GM12878 (cell line): ENCODE measurements at regions of chr2 and their contacts with region 1.

Region 1: DNA sequence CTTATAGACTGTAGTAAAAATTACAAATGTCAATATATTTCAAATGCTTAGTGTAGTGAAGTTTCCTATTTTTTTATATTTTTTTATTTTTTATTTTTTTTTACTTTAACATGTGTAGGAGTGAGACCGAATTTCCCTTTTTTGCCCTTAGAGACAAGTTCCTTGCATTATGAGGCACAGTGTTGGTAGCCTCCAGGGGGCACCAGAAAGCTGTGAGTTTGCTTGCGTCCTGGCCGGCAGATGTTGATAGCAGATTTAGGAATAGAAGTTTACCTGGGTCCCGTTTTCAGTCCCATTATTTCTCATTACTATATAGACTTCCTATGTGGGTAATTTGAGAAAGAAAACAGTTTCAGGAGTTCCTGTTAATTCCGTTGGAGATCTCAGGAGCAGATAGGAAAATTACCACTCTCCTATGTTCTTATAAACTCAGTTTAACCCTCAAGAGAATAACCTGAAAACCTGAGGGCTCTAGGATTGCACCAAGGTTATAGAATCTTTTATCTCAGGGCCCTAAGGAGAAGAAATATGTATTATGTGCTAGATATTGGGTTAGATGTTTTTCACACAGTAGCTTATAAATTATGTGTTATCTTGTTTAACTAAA is 157.5 kb upstream of the SESTD1 start:
- DNase-seq: no peak
- ATAC-seq: peak; percentile 89
- H3K4me3 ChIP-seq: no peak overlapping the region
- H3K27ac ChIP-seq: no peak overlapping the region
- H3K4me1 ChIP-seq: no peaks in the 10 kb centered on the region
- H3K27me3 ChIP-seq: no peaks in the 10 kb centered on the region; a peak in 1 of 4 replicates
- CTCF ChIP-seq: peak; percentile 66 to 77 (median 69)
- EP300 ChIP-seq: no peak
- POLR2A ChIP-seq: no peak
- RAD21 ChIP-seq: peak; percentile 76

Region 2: DNA sequence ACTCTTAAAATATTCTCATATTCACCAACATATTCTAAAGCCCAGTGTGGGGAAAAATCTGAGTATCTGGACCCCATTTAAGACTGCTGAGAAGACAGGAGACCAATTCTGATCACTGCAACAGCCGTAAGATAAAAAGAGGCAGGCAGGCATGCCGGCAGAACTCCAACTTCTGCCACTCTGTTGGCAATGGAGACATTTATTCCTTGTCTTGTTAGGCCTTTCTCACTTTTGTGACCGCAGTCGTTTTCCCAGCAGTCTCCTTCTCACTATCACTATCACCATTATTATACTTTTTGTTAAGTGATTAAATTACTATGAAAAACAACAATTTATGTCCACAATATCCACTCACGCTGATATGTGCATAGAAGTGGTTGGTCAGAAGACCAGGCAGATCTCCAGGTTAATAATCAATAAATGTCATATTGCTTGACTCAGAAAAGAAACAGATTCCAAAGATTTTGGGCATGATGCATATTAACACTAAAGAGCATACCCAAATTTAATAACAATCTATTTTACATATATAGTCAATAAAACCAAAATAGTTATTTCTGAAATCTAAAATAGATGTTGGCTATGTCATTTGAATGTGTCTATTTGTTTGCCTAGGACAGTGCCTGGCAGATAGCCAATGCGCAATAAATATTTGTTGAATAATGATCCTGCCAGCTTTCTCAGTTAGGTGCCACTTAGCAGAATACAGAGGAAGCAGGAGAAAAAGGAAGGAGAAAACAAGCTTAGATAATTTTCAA is 195.8 kb before region 1 on chr2:
- CTCF ChIA-PET with region 1: no interaction called
- POLR2A ChIA-PET with region 1: no interaction called
- RAD21 ChIA-PET with region 1: no interaction called
- SMC1A ChIA-PET with region 1: no interaction called
- in situ Hi-C with region 1: loop called (anchors 10 kb)
- intact Hi-C with region 1: no loop called
- DNase-seq: no peak
- ATAC-seq: no peak
- H3K4me3 ChIP-seq: no peak overlapping the region
- H3K27ac ChIP-seq: no peak overlapping the region
- H3K4me1 ChIP-seq: no peaks in the 10 kb centered on the region
- H3K27me3 ChIP-seq: no peaks in the 10 kb centered on the region
- CTCF ChIP-seq: no peak
- EP300 ChIP-seq: no peak
- POLR2A ChIP-seq: no peak
- RAD21 ChIP-seq: no peak

Region 3: DNA sequence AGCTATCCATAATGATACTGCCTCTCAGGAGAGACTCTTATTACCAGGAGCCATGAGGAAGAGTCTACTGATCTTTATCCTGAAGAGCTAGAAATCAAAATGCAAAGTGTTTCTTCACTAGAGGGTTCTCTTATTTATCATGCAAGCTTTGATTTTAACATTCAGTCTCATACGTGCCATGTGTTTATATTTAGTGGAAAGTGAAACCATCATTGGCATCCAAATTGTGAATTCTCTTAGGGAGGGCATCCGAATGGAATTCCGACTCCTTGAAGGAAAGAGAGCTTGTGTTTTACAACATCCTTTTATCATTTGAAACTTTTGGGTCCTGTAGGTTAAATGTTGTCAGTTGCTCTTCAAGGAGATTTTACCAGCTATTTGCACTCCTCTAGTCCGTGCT is 12.9 kb after region 1 on chr2:
- CTCF ChIA-PET with region 1: interaction called, 34 read pairs
- POLR2A ChIA-PET with region 1: no interaction called
- RAD21 ChIA-PET with region 1: interaction called, 4 read pairs
- SMC1A ChIA-PET with region 1: interaction called, 16 read pairs
- in situ Hi-C with region 1: no loop called
- intact Hi-C with region 1: no loop called
- DNase-seq: no peak
- ATAC-seq: no peak
- H3K4me3 ChIP-seq: no peak overlapping the region
- H3K27ac ChIP-seq: no peak overlapping the region
- H3K4me1 ChIP-seq: no peaks in the 10 kb centered on the region
- H3K27me3 ChIP-seq: no peaks in the 10 kb centered on the region
- CTCF ChIP-seq: no peak
- EP300 ChIP-seq: no peak
- POLR2A ChIP-seq: no peak
- RAD21 ChIP-seq: no peak

Region 4: GRCh38 chr2:179751163-179751809 is 329.1 kb after region 1 on chr2:
- CTCF ChIA-PET with region 1: interaction called, 3 read pairs
- POLR2A ChIA-PET with region 1: no interaction called
- RAD21 ChIA-PET with region 1: no interaction called
- SMC1A ChIA-PET with region 1: interaction called, 4 read pairs
- in situ Hi-C with region 1: loop called (anchors 10 kb)
- intact Hi-C with region 1: loop called (anchors 1 kb)
- DNase-seq: no peak
- ATAC-seq: peak; percentile 50
- H3K4me3 ChIP-seq: no peak overlapping the region
- H3K27ac ChIP-seq: no peak overlapping the region
- H3K4me1 ChIP-seq: no peaks in the 10 kb centered on the region
- H3K27me3 ChIP-seq: no peaks in the 10 kb centered on the region
- CTCF ChIP-seq: peak; percentile 42 to 66 (median 57); a peak in 5 of 6 replicates
- EP300 ChIP-seq: no peak
- POLR2A ChIP-seq: no peak
- RAD21 ChIP-seq: peak; percentile 78

Region 5: GRCh38 chr2:179965291-179966258 is 543.4 kb after region 1 on chr2:
- CTCF ChIA-PET with region 1: no interaction called
- POLR2A ChIA-PET with region 1: no interaction called
- RAD21 ChIA-PET with region 1: no interaction called
- SMC1A ChIA-PET with region 1: no interaction called
- in situ Hi-C with region 1: no loop called
- intact Hi-C with region 1: no loop called
- DNase-seq: no peak
- ATAC-seq: no peak
- H3K4me3 ChIP-seq: no peak overlapping the region
- H3K27ac ChIP-seq: no peak overlapping the region
- H3K4me1 ChIP-seq: no peaks in the 10 kb centered on the region
- H3K27me3 ChIP-seq: no peaks in the 10 kb centered on the region
- CTCF ChIP-seq: no peak
- EP300 ChIP-seq: no peak
- POLR2A ChIP-seq: no peak
- RAD21 ChIP-seq: no peak